ENCODE measurements at regions of chr12 and their contacts with region 1.

Region 1: GRCh38 chr12:28172434-28173030 is 17.7 kb upstream of the CCDC91 start:
- DNase-seq: peak; percentile 90
- ATAC-seq: peak; percentile 98
- H3K4me3 ChIP-seq: no peak overlapping the region
- H3K27ac ChIP-seq: no peak overlapping the region
- H3K4me1 ChIP-seq: peaks cover 6% of the 10 kb centered on the region; the same call in 1 of the 2 replicates
- H3K27me3 ChIP-seq: no peaks in the 10 kb centered on the region
- CTCF ChIP-seq: peak; percentile 95

Region 2: GRCh38 chr12:27733052-27733656 is 439.4 kb before region 1 on chr12:
- CTCF ChIA-PET with region 1: no interaction called
- POLR2A ChIA-PET with region 1: no interaction called
- intact Hi-C with region 1: loop called (anchors 2 kb)
- DNase-seq: peak; percentile 82
- ATAC-seq: peak; percentile 47
- H3K4me3 ChIP-seq: no peak overlapping the region
- H3K27ac ChIP-seq: no peak overlapping the region
- H3K4me1 ChIP-seq: 0 out of 2 replicates have a peak, but pooled peaks cover 4% of the 10 kb centered on the region
- H3K27me3 ChIP-seq: no peaks in the 10 kb centered on the region
- CTCF ChIP-seq: peak; percentile 98

Region 3: GRCh38 chr12:27840244-27840999 is 332.1 kb before region 1 on chr12:
- CTCF ChIA-PET with region 1: no interaction called
- POLR2A ChIA-PET with region 1: no interaction called
- intact Hi-C with region 1: loop called (anchors 10 kb)
- DNase-seq: peak; percentile 48
- ATAC-seq: peak; percentile 30
- H3K4me3 ChIP-seq: no peak overlapping the region
- H3K27ac ChIP-seq: no peak overlapping the region
- H3K4me1 ChIP-seq: peaks cover 17% of the 10 kb centered on the region
- H3K27me3 ChIP-seq: no peaks in the 10 kb centered on the region
- CTCF ChIP-seq: peak; percentile 90

Region 4: DNA sequence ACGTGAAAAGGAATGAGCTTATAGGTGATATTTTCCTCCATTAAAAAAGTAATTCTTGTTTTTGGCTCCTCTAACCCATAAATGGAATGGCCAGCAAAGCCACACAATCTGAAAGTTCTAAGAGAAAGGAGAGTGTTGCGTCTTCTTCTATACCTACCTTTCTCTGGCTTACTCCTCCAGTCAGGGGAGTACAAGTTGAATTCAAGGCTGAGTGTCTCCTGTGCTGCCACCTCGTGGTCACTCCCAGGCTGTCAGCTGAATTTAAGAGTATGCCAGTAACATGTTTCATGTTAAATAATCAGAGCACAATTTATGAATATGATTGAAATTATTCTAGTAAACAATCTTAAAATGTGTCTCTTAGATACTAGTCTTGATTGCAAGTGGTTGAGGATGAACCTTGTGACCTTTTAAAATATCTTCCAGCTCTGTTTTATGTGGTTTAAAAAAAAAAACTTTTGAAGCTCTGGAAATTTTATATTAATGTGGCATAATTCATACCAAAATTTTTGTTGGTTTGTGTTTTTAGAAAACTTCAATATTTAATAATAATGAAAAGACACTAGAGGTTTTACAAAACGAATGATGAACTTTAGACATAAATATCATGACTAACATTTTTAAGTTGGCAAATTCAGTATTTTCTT is 231.7 kb before region 1 on chr12:
- CTCF ChIA-PET with region 1: no interaction called
- POLR2A ChIA-PET with region 1: no interaction called
- intact Hi-C with region 1: loop called (anchors 1 kb)
- DNase-seq: peak; percentile 96
- ATAC-seq: peak; percentile 100
- H3K4me3 ChIP-seq: no peak overlapping the region
- H3K27ac ChIP-seq: no peak overlapping the region
- H3K4me1 ChIP-seq: no peaks in the 10 kb centered on the region
- H3K27me3 ChIP-seq: no peaks in the 10 kb centered on the region
- CTCF ChIP-seq: peak; percentile 99

Region 5: GRCh38 chr12:28114488-28114887 is 58.0 kb before region 1 on chr12:
- CTCF ChIA-PET with region 1: interaction called, 4 read pairs
- POLR2A ChIA-PET with region 1: no interaction called
- intact Hi-C with region 1: loop called (anchors 2 kb)
- DNase-seq: peak; percentile 86
- ATAC-seq: peak; percentile 95
- H3K4me3 ChIP-seq: no peak overlapping the region
- H3K27ac ChIP-seq: peak overlapping the region; percentile 62
- H3K4me1 ChIP-seq: peaks cover 22% of the 10 kb centered on the region
- H3K27me3 ChIP-seq: no peaks in the 10 kb centered on the region
- CTCF ChIP-seq: no peak

Region 6: DNA sequence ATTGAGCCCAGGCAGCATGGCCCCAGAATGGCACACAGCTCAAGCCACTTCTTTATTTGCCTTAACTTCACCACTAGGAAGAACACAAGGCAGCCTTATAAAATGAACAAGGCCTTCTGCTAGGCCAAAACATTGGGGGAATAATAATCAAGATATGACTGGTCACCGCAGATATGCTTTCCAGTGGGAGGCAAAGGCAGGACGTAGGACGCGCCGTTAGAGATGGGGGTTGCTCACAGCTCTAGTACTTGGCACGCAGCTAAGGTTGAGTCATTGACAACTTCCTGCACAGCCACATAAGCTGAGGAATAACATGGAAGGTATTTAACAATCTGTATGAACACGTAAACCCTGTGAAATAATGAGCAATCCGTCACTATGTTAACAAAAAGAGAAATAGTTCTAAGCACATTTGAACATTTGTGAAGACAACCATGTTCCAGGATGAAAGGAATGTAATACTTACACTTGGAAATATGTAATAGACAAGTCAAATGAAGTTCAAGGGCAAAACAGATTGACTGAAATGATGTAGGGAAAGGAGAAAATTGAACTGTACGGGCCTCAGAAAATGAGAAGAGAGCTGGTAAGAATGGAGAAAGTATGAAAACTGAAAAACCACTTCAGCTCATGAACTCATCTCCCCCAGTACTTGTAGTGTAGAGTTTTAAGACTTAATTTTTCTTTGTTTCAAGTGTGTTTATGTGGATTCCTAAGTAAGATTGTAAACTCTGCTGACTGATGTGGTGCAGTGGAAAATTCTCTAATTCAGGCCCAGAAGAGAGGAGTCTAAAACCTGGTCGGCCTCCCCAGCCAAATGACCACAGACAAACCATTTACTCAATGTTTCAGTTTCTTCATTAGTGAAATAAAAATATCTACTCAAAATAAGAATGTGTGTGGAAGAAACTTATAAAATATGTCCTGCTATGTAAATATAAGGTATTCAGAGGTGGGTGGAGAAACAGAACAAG is 41.6 kb before region 1 on chr12:
- CTCF ChIA-PET with region 1: no interaction called
- POLR2A ChIA-PET with region 1: no interaction called
- intact Hi-C with region 1: loop called (anchors 2 kb)
- DNase-seq: peak; percentile 98
- ATAC-seq: peak; percentile 98
- H3K4me3 ChIP-seq: 0 out of 2 replicates have a peak overlapping the region, but pooled peaks have one; percentile 9
- H3K27ac ChIP-seq: peak overlapping the region; percentile 92
- H3K4me1 ChIP-seq: peaks cover 31% of the 10 kb centered on the region
- H3K27me3 ChIP-seq: no peaks in the 10 kb centered on the region
- CTCF ChIP-seq: no peak

Region 7: DNA sequence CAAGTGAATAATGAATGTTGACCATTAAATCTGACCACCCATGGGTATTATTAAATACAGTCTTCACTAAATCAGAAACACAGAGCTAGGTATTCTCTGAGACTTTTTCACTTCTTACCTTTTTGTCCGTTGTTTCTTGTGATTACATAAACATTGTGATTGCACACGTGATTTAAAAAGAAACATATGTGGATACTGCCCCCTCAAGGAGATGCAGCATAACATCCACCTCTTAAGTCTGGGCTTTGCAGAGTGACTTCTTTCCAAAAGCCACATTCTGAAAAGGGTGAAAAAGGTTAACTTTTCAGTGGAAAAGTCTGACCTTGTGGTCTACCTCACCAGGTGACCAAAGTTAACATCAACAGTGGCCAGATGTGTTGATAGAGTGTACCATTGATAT is 791.0 kb after region 1 on chr12:
- CTCF ChIA-PET with region 1: no interaction called
- POLR2A ChIA-PET with region 1: no interaction called
- intact Hi-C with region 1: loop called (anchors 10 kb)
- DNase-seq: peak; percentile 95
- ATAC-seq: peak; percentile 63
- H3K4me3 ChIP-seq: no peak overlapping the region
- H3K27ac ChIP-seq: no peak overlapping the region
- H3K4me1 ChIP-seq: peaks cover 19% of the 10 kb centered on the region
- H3K27me3 ChIP-seq: no peaks in the 10 kb centered on the region
- CTCF ChIP-seq: peak; percentile 100